Breast epithelium (tissue), 4 donors: ENCODE measurements at regions of chr4 and their contacts with region 1.

Region 1: GRCh38 chr4:37902738-37903693 is 12.1 kb downstream of the TBC1D1 start:
- DNase-seq: no peak
- H3K4me3 ChIP-seq: no peak overlapping the region
- H3K27ac ChIP-seq: no peak overlapping the region
- H3K4me1 ChIP-seq: no peaks in the 10 kb centered on the region
- H3K27me3 ChIP-seq: no peaks in the 10 kb centered on the region
- CTCF ChIP-seq: no peak
- POLR2A ChIP-seq: no peak

Region 2: DNA sequence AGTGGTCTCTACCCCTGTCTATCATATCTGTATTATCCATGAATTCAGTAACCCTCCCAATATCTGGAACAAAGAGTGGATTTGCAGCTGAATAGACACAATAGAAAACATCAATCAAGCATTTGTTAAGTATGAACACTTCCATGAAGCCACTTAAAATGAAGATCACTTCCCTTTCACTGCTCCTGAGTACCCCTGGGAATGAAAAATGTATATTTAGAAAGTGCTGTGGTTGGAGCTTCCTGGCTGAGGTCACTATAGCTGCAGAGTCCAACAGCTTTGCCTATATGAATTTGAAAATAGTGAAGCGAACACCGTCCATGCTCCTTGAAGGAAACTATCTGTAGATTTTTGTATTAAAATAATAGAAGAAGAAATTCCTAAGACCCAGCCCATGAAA is 1394.6 kb before region 1 on chr4:
- intact Hi-C with region 1: no loop called
- DNase-seq: no peak
- H3K4me3 ChIP-seq: no peak overlapping the region
- H3K27ac ChIP-seq: no peak overlapping the region
- H3K4me1 ChIP-seq: no peaks in the 10 kb centered on the region
- H3K27me3 ChIP-seq: no peaks in the 10 kb centered on the region
- CTCF ChIP-seq: no peak
- POLR2A ChIP-seq: no peak

Region 3: DNA sequence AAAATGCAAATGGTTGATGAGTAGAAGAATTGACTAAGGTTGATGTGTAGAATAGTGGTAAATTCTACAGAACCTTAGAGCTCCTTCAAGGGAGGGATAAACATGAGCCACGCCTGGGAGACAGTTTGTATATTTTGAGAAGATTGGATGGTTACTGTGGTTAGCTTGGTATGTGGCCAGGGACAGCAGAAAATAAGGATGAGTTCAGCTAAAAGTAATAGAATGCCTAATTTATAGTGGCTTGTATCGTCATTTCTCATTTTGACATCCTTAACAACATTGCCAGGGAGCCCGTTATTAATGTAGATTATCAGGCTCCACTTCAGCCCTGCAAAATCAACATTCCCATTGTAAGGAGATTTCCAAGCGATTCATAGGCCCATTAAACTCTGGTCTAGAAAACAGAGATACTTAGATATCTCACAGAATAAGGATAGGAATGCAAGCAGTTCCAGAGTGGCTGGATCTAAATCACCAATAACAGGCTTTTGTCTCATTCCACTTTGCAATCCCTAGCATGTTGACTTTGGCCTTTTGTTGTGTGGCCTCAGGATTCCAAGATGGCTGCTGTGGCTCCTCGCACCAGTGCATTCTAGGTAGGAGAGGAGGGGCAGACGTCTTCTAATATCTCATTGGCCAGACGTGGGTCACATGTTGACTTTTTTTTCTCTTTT is 50.7 kb after region 1 on chr4:
- intact Hi-C with region 1: loop called (anchors 2 kb)
- DNase-seq: no peak
- H3K4me3 ChIP-seq: no peak overlapping the region
- H3K27ac ChIP-seq: no peak overlapping the region
- H3K4me1 ChIP-seq: no peaks in the 10 kb centered on the region
- H3K27me3 ChIP-seq: no peaks in the 10 kb centered on the region
- CTCF ChIP-seq: no peak
- POLR2A ChIP-seq: no peak